Right cardiac atrium (tissue), 5 donors: ENCODE measurements at regions of chr9 and their contacts with region 1.

Region 1: DNA sequence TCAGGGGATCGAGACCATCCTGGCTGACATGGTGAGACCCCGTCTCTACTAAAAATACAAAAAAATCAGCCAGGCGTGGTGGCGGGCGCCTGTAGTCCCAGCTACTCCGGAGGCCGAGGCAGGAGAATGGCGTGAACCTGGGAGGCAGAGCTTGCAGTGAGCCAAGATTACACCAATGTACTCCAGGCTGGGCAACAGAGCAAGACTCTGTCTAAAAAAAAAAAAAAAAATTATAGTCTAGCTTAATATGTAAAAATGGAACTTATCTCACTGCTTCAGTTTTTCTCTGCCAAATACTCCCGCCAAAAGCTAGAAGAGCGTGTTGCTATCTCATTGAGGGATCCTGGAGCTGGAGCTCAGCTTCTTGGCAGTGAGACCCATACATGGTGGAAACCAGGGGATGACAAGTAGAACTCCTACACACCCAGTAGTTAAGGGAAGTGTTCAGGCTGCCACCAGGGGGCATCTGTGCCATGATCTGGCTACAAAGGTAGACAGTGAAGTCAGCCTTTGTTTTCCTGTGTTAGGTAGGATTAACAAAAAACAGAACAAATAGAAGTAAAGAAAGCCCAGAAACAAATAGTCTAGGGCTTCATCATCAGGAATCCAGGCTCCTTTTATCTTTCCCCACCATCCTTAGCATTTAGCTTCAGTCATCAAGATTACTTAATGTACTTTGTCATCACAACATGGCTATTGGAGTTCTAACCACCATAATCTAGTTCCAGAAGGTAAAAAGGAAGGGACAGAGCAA is 33.6 kb upstream of the GLIPR2 start:
- DNase-seq: peak; percentile 83 to 93 (median 88)
- ATAC-seq: peak; percentile 91 to 94
- H3K4me3 ChIP-seq: no peak overlapping the region
- H3K27ac ChIP-seq: no peak overlapping the region
- H3K4me1 ChIP-seq: no peaks in the 10 kb centered on the region
- H3K27me3 ChIP-seq: no peaks in the 10 kb centered on the region

Region 2: DNA sequence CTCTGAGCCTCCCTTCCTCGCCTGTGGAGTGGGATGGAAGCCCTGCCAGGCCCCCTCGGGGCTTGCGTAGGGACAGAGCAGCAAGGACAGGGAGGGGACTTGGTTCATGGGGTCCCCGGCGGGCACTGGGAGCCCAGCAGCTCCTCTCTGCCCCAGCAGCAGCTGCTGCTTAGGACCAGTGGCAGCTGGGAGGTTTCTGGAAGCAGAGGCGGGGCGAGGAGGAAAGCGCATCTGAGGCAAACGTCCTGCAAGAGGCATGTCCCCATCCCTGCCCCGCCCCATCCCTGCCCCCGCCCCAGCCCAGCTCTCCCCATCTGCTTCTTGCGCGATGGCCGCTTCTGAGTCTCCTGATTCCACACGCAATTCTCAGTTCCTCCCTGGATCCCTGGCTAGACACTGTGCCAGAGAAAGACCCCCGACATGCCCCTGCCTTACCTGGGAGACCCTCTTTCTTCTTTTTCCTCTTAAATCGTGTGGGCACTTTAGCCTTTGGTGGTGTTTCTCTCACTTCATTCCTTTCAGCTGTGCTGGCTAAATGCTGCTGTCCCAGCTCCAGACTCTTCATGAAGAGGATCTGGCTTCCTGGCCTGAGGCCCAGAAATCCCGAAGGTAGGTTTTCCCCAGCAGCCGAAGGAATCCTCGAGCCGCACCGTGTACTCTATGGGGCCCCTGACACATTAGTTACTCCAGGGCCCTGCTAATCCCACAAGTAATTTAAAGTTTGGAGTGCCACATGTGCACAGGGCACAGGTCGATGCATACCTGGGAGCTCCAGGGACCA is 140.6 kb before region 1 on chr9:
- intact Hi-C with region 1: no loop called
- DNase-seq: peak in 2 of 3 donors; percentile 49 to 54
- ATAC-seq: peak in 1 of 2 donors; percentile 46
- H3K4me3 ChIP-seq: no peak overlapping the region
- H3K27ac ChIP-seq: no peak overlapping the region
- H3K4me1 ChIP-seq: no peaks in the 10 kb centered on the region
- H3K27me3 ChIP-seq: no peaks in the 10 kb centered on the region

Region 3: GRCh38 chr9:36166101-36166927 is 63.4 kb after region 1 on chr9:
- intact Hi-C with region 1: loop called (anchors 2 to 10 kb)
- DNase-seq: peak; percentile 84 to 94 (median 93)
- ATAC-seq: peak; percentile 94
- H3K4me3 ChIP-seq: peak overlapping the region; percentile 33
- H3K27ac ChIP-seq: peak overlapping the region; percentile 8
- H3K4me1 ChIP-seq: no peaks in the 10 kb centered on the region
- H3K27me3 ChIP-seq: no peaks in the 10 kb centered on the region